Mammary epithelial cell (primary cell): ENCODE measurements at regions of chr7 and their contacts with region 1.

Region 1: GRCh38 chr7:37201003-37201875 is 247.4 kb downstream of the ELMO1 start:
- DNase-seq: peak; percentile 59
- H3K4me3 ChIP-seq: no peak overlapping the region
- H3K27ac ChIP-seq: no peak overlapping the region
- H3K4me1 ChIP-seq: no peaks in the 10 kb centered on the region
- H3K27me3 ChIP-seq: no peaks in the 10 kb centered on the region
- CTCF ChIP-seq: peak; percentile 79 to 83

Region 2: DNA sequence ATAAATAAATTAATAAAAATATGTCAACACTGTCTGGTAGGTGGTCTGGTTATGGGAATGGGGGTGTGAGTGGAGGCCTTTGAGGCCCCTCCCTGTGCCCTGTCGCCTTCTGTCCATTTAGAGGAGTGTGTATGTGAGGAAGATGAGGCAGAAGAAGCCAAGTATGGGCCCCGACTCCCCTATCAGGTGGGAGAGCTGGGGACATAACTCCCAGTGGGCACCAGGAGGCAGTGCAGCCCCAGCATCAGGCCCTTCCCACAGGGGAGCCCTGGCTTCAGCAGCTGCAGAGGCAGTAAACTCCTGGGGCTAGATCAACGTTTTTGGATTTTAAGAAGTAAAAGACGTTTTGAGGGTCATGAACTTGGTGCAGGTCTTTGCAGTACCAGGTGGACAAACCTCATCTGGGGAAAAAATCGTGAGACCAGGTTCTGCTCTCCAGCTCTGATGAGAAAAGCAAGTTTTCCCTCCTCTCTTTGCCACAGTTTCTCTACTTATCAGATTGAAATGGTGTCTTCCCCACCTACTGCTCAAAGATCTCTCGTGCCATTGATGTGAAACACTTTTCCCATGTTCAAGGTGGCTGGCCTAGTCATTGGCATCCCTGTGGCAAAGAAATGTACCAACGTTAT is 1216.0 kb before region 1 on chr7:
- CTCF ChIA-PET with region 1: no interaction called
- dilution Hi-C with region 1: no loop called
- in situ Hi-C with region 1: loop called in 1 of 2 experiments (anchors 25 kb)
- intact Hi-C with region 1: loop called (anchors 2 kb)
- DNase-seq: peak; percentile 38
- H3K4me3 ChIP-seq: no peak overlapping the region
- H3K27ac ChIP-seq: no peak overlapping the region
- H3K4me1 ChIP-seq: no peaks in the 10 kb centered on the region
- H3K27me3 ChIP-seq: peaks cover 2% of the 10 kb centered on the region
- CTCF ChIP-seq: peak; percentile 95 to 99

Region 3: GRCh38 chr7:36440880-36441279 is 760.4 kb before region 1 on chr7:
- CTCF ChIA-PET with region 1: interaction called, 7 read pairs
- dilution Hi-C with region 1: no loop called
- in situ Hi-C with region 1: no loop called
- intact Hi-C with region 1: loop called (anchors 1 kb)
- DNase-seq: peak; percentile 6
- H3K4me3 ChIP-seq: no peak overlapping the region
- H3K27ac ChIP-seq: no peak overlapping the region
- H3K4me1 ChIP-seq: no peaks in the 10 kb centered on the region
- H3K27me3 ChIP-seq: no peaks in the 10 kb centered on the region
- CTCF ChIP-seq: peak; percentile 45 to 50

Region 4: DNA sequence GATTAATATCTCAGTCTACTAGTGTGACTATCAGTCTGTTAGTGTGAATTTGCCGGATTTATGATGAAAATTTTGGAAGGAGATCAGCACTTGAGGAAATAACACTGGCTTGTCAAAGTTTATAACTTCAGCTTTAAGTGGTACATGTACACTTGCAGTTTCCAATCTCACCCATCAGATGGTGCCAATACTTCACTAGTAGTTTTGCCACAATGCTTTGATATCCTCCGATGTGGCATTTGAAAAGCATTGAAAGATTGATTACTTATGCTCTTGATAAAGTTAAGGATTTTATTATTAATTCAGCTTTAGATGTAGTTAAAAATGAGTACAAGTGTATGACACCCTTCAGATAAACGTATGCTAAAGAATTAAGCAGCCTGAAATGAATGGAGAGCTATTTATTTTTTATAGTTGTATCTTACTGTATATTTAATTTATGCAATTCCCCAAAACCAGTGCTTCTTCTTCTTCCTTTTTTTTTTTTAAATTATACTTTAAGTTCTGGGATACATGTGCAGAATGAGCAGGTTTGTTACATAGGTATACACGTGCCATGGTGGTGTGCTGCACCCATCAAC is 713.4 kb before region 1 on chr7:
- CTCF ChIA-PET with region 1: interaction called, 8 read pairs
- dilution Hi-C with region 1: loop called (anchors 5 kb)
- in situ Hi-C with region 1: no loop called
- intact Hi-C with region 1: loop called (anchors 1 kb)
- DNase-seq: peak; percentile 60
- H3K4me3 ChIP-seq: no peak overlapping the region
- H3K27ac ChIP-seq: no peak overlapping the region
- H3K4me1 ChIP-seq: no peaks in the 10 kb centered on the region
- H3K27me3 ChIP-seq: no peaks in the 10 kb centered on the region
- CTCF ChIP-seq: peak; percentile 84 to 85

Region 5: GRCh38 chr7:36686499-36686898 is 514.7 kb before region 1 on chr7:
- CTCF ChIA-PET with region 1: no interaction called
- dilution Hi-C with region 1: no loop called
- in situ Hi-C with region 1: no loop called
- intact Hi-C with region 1: loop called (anchors 5 kb)
- DNase-seq: peak; percentile 91
- H3K4me3 ChIP-seq: no peak overlapping the region
- H3K27ac ChIP-seq: peak overlapping the region; percentile 72
- H3K4me1 ChIP-seq: peaks cover 53% of the 10 kb centered on the region
- H3K27me3 ChIP-seq: no peaks in the 10 kb centered on the region
- CTCF ChIP-seq: no peak

Region 6: GRCh38 chr7:36986429-36987362 is 214.5 kb before region 1 on chr7:
- CTCF ChIA-PET with region 1: no interaction called
- dilution Hi-C with region 1: no loop called
- in situ Hi-C with region 1: loop called in 1 of 2 experiments (anchors 25 kb)
- intact Hi-C with region 1: loop called (anchors 1 kb)
- DNase-seq: peak; percentile 41
- H3K4me3 ChIP-seq: no peak overlapping the region
- H3K27ac ChIP-seq: no peak overlapping the region
- H3K4me1 ChIP-seq: no peaks in the 10 kb centered on the region
- H3K27me3 ChIP-seq: no peaks in the 10 kb centered on the region
- CTCF ChIP-seq: peak; percentile 94 to 97